Heart left ventricle (tissue), 16 donors: ENCODE measurements at regions of chr20 and their contacts with region 1.

Region 1: GRCh38 chr20:45450097-45450818 is 19.3 kb upstream of the WFDC2 start:
- DNase-seq: no peak
- ATAC-seq: peak; percentile 16 to 50 (median 42)
- H3K4me3 ChIP-seq: no peak overlapping the region
- H3K27ac ChIP-seq: peak overlapping the region in 4 of 12 donors; percentile 10 to 83 (median 43)
- H3K4me1 ChIP-seq: peaks cover 0 to 9% (median 0%) of the 10 kb centered on the region in 12 donors
- H3K27me3 ChIP-seq: no peaks in the 10 kb centered on the region
- CTCF ChIP-seq: peak; percentile 48 to 73 (median 62)
- POLR2A ChIP-seq: no peak

Region 2: DNA sequence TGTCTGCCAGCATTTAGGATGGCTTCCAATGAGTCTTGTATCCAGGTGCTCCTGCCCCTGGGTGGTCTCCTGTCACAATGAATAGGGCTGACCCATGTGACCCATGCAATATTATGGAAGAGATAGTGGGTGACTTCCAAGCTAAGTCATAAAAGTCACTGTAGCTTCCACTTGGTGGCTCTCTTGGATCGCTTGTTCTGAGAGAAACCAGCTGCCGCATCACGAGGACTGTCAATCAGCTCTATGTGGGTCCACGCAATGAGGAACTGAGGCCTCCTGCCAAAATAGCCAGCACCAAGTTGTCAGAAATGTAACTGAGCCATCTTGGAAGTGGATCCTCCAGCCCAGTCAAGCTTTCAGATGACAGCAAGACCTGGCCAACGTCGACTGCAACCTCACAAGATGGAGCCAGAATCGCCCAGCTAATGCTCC is 127.3 kb before region 1 on chr20:
- intact Hi-C with region 1: loop called in 2 of 10 experiments (anchors 5 kb)
- DNase-seq: peak in 4 of 5 donors; percentile 63 to 80 (median 74)
- ATAC-seq: peak; percentile 77 to 82 (median 80)
- H3K4me3 ChIP-seq: no peak overlapping the region
- H3K27ac ChIP-seq: peak overlapping the region in 2 of 12 donors; percentile 41 to 42
- H3K4me1 ChIP-seq: peaks cover 0 to 22% (median 0%) of the 10 kb centered on the region in 12 donors
- H3K27me3 ChIP-seq: peaks cover 0 to 2% (median 0%) of the 10 kb centered on the region in 9 donors
- CTCF ChIP-seq: peak; percentile 17 to 63 (median 46)
- POLR2A ChIP-seq: no peak

Region 3: DNA sequence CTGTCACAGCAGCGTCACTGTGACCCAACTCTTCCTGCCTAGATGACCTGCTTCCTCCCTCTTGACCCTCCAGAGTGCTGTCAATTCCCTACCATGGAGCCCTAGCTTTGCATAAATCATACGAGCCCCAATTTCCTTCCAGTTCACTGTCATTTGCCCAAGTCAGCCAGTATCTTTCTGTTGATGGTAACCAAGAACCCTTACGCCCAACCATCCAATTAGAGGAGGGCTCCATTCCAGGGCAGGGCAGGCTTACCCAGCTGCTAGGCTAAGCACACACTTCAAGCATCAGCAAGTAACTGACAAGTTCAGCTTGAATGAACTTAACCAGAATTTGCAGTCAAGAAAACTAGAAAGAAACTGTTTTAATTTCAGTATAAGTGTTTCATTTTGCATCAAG is 315.7 kb after region 1 on chr20:
- intact Hi-C with region 1: loop called in 6 of 10 experiments (anchors 5 to 10 kb)
- DNase-seq: no peak
- ATAC-seq: no peak
- H3K4me3 ChIP-seq: no peak overlapping the region
- H3K27ac ChIP-seq: no peak overlapping the region
- H3K4me1 ChIP-seq: peaks cover 0 to 3% (median 2%) of the 10 kb centered on the region in 12 donors
- H3K27me3 ChIP-seq: no peaks in the 10 kb centered on the region
- CTCF ChIP-seq: no peak
- POLR2A ChIP-seq: no peak